Activated T-helper 1 cell treated with anti-CD3 and anti-CD28 coated beads, Interleukin-12 subunit alpha, Interleukin-12 subunit beta, Interleukin-2, Interleukin-4 antibody, amounts not matched to agents 30 ng/mL and 10 ng/mL and 1 ng/mL, durations not matched to agents 14 hours and 24 hours and 36 hours (primary cell): ENCODE measurements at regions of chr16 and their contacts with region 1.

Region 1: GRCh38 chr16:29738514-29738913 is 7.3 kb downstream of the C16orf54 start:
- DNase-seq: peak; percentile 58
- H3K4me3 Mint-ChIP-seq: peak overlapping the region; percentile 48
- H3K27ac Mint-ChIP-seq: peak overlapping the region; percentile 62
- H3K4me1 Mint-ChIP-seq: peaks cover 66% of the 10 kb centered on the region
- H3K27me3 Mint-ChIP-seq: no peaks in the 10 kb centered on the region

Region 2: GRCh38 chr16:29757950-29758466 is 19.5 kb after region 1 on chr16:
- intact Hi-C with region 1: loop called (anchors 2 kb)
- DNase-seq: no peak
- H3K4me3 Mint-ChIP-seq: no peak overlapping the region
- H3K27ac Mint-ChIP-seq: no peak overlapping the region
- H3K4me1 Mint-ChIP-seq: peaks cover 9% of the 10 kb centered on the region
- H3K27me3 Mint-ChIP-seq: peaks cover 3% of the 10 kb centered on the region